Left lung (tissue), 14 donors: ENCODE measurements at regions of chr19 and their contacts with region 1.

Region 1: DNA sequence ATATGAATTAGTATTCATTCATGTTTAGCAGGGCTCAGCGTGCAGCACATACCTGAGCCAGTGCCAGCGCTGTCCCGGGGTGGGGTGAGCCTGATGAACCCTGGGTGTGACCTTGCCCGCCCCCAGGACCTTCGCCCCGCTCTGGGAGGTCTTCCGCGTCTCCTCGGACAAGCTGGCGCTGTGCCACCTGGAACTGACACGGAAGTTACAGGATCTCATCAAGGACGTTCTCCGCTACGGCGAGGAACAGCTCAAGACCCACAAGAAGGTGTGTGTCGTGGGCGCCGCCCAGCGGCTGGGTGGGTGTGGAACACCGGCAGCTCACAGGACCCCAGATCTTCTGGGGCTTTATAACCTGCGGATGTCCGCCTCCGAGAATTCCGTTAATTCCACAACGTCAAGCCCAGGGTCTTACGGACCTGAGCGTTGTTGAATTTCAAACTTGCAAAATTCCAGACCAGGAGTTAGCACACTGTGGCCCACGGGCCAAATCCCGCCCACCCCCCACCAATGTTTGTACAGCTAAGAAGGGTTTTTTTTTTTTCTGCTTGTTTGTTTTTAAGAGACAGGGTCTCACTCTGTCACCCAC is 15.4 kb downstream of the FCHO1 start:
- DNase-seq: peak; percentile 28 to 95 (median 78)
- ATAC-seq: peak; percentile 94
- H3K4me3 ChIP-seq: peak overlapping the region in 1 of 2 donors; percentile 9
- H3K27ac ChIP-seq: no peak overlapping the region
- H3K4me1 ChIP-seq: peaks cover 0 to 23% of the 10 kb centered on the region in 2 donors
- H3K27me3 ChIP-seq: peaks cover 0 to 7% of the 10 kb centered on the region in 2 donors
- CTCF ChIP-seq: peak; percentile 70 to 84

Region 2: GRCh38 chr19:17703824-17704463 is 62.7 kb before region 1 on chr19:
- intact Hi-C with region 1: loop called in 1 of 2 experiments (anchors 5 kb)
- DNase-seq: peak in 1 of 4 donors; percentile 89
- ATAC-seq: peak; percentile 91
- H3K4me3 ChIP-seq: no peak overlapping the region
- H3K27ac ChIP-seq: no peak overlapping the region
- H3K4me1 ChIP-seq: no peaks in the 10 kb centered on the region
- H3K27me3 ChIP-seq: peaks cover 0 to 45% of the 10 kb centered on the region in 2 donors
- CTCF ChIP-seq: peak; percentile 91 to 92

Region 3: DNA sequence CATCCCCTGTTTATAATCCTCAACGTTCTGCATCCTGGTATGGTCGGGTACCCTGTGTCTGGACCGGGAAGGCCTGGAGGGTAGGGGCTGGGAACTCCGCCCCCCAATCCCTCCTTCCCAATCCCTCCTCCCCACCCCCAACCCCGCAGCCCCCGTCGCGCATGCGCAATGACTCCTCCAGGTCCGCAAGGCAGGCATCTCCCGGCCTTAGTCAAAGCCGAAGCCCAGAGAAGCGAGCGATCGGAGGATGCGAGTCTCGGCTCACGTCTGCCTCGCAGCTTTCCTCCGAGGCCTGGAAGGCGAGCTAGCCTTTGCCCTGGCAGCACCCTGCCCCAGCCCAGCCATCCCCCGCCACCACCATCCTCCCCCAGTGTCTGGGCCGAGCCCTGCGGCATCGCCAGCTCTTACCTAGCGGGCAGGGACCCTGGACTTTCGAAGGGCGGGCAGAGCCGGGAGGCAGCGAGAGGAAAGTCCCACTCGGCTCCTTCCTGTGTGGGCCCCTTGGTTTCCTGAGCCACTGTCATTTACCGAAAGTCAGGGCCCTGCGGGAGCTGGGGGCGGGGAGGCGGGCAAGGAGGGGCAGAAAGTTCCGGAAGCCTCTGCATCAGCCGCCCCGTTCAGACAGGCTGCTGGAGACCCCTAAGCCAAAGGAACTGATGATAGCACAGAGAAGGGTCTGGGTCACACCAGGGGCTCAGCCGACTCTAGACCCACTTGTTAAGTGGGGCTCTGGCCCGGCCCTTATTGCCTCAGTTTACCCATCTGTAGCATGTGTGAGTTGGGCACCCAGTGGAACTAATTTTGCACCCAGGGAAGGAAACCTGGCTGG is 81.1 kb after region 1 on chr19 and contains the start of gene JAK3:
- intact Hi-C with region 1: no loop called
- DNase-seq: peak; percentile 53 to 91 (median 72)
- ATAC-seq: peak; percentile 62
- H3K4me3 ChIP-seq: peak within 1 kb of the TSS; percentile 32 to 53
- H3K27ac ChIP-seq: peak within 1 kb of the TSS; percentile 85 to 96
- H3K4me1 ChIP-seq: peaks cover 0 to 80% of the 10 kb centered on the region in 2 donors
- H3K27me3 ChIP-seq: peaks cover 0 to 4% of the 10 kb centered on the region in 2 donors
- CTCF ChIP-seq: no peak
- polyA plus RNA-seq, gene JAK3: 2.3 to 3.9 (median 2.8) TPM